ENCODE measurements at regions of chr19 and their contacts with region 1.

Region 1: GRCh38 chr19:18251587-18252369 is 22.5 kb downstream of the IQCN start:
- DNase-seq: peak; percentile 86
- H3K4me3 ChIP-seq: no peak overlapping the region
- H3K27ac ChIP-seq: no peak overlapping the region
- H3K4me1 ChIP-seq: peaks cover 0 to 29% (median 10%) of the 10 kb centered on the region in 4 donors
- H3K27me3 ChIP-seq: peaks cover 8% of the 10 kb centered on the region
- CTCF ChIP-seq: peak; percentile 94 to 99 (median 97)
- EP300 ChIP-seq: no peak
- POLR2A ChIP-seq: no peak

Region 2: GRCh38 chr19:18102916-18103542 is 148.7 kb before region 1 on chr19:
- in situ Hi-C with region 1: no loop called
- intact Hi-C with region 1: no loop called
- DNase-seq: no peak
- H3K4me3 ChIP-seq: no peak overlapping the region
- H3K27ac ChIP-seq: no peak overlapping the region
- H3K4me1 ChIP-seq: peaks cover 4 to 26% (median 23%) of the 10 kb centered on the region in 4 donors
- H3K27me3 ChIP-seq: peaks cover 35% of the 10 kb centered on the region
- CTCF ChIP-seq: no peak
- EP300 ChIP-seq: no peak
- POLR2A ChIP-seq: no peak

Region 3: GRCh38 chr19:18112989-18113478 is 138.7 kb before region 1 on chr19:
- in situ Hi-C with region 1: no loop called
- intact Hi-C with region 1: loop called (anchors 5 kb)
- DNase-seq: peak; percentile 91
- H3K4me3 ChIP-seq: no peak overlapping the region
- H3K27ac ChIP-seq: peak overlapping the region in 3 of 4 donors; percentile 15 to 39 (median 38)
- H3K4me1 ChIP-seq: peaks cover 16 to 45% (median 29%) of the 10 kb centered on the region in 4 donors
- H3K27me3 ChIP-seq: no peaks in the 10 kb centered on the region
- CTCF ChIP-seq: peak; percentile 78 to 91 (median 86)
- EP300 ChIP-seq: no peak
- POLR2A ChIP-seq: no peak

Region 4: GRCh38 chr19:18211683-18212082 is 40.1 kb before region 1 on chr19:
- in situ Hi-C with region 1: no loop called
- intact Hi-C with region 1: loop called (anchors 2 kb)
- DNase-seq: no peak
- H3K4me3 ChIP-seq: no peak overlapping the region
- H3K27ac ChIP-seq: no peak overlapping the region
- H3K4me1 ChIP-seq: no peaks in the 10 kb centered on the region
- H3K27me3 ChIP-seq: peaks cover 12% of the 10 kb centered on the region
- CTCF ChIP-seq: no peak
- EP300 ChIP-seq: no peak
- POLR2A ChIP-seq: no peak